ENCODE measurements at regions of chr1 and their contacts with region 1.

Region 1: GRCh38 chr1:211578640-211579433 is at the start of gene SLC30A1:
- DNase-seq: peak; percentile 98
- H3K4me3 ChIP-seq: peak within 1 kb of the TSS; percentile 74 to 99 (median 98)
- H3K27ac ChIP-seq: peak within 1 kb of the TSS; percentile 64
- H3K4me1 ChIP-seq: peaks cover 33% of the 10 kb centered on the region
- H3K27me3 ChIP-seq: no peaks in the 10 kb centered on the region
- CTCF ChIP-seq: no peak
- POLR2A ChIP-seq: peak; percentile 94
- total RNA-seq, gene SLC30A1: 21.5 and 22.1 TPM in 2 replicates

Region 2: DNA sequence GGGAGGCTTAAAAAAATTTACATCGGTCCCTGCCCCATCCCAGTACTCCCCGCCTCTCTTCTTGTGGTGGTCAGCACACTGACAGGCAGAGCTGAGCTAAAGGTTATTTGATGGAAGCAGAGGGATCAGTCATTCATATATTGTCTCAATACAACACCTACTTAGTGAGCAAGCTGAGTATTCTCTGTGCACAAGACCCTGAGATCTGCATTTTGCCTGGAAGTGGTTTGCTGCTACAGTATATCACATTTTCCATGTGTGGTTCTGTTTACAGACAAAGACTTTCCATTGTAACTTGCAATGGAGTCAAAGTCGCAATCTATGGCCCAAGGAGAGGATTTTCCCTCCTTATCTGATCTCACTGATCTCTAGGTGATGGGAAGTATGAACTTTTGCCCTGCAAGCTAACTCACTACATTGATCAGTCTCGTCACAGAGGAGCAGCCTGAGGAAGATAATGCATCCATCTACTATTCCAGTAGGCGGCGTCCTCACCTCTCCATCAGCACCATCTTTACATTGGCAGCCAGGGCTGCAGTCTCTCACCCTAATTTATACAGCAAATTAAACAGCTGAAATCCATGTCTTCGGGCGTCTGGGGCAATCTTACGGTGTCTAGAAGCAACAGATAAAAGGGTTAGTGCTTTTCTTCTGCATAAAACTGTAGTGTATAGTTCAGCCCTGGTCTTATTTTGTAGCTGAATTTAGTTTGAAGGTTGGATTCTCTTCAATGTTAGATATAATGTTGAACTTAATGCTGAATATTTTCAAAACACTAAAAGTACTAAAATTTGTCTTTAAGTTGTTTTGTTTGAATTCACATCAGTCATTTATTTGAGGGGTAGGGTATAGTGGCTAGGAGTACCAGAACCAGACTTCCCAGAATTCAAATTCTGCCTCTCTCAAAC is 255.4 kb before region 1 on chr1:
- CTCF ChIA-PET with region 1: interaction called, 4 read pairs
- POLR2A ChIA-PET with region 1: no interaction called
- dilution Hi-C with region 1: no loop called
- intact Hi-C with region 1: loop called (anchors 1 kb)
- DNase-seq: peak; percentile 68
- H3K4me3 ChIP-seq: no peak overlapping the region
- H3K27ac ChIP-seq: no peak overlapping the region
- H3K4me1 ChIP-seq: peaks cover 3% of the 10 kb centered on the region
- H3K27me3 ChIP-seq: no peaks in the 10 kb centered on the region
- CTCF ChIP-seq: peak; percentile 79 to 80
- POLR2A ChIP-seq: no peak

Region 3: GRCh38 chr1:211476200-211476849 is 102.5 kb before region 1 on chr1:
- CTCF ChIA-PET with region 1: interaction called, 3 read pairs
- POLR2A ChIA-PET with region 1: no interaction called
- dilution Hi-C with region 1: no loop called
- intact Hi-C with region 1: loop called (anchors 2 kb)
- DNase-seq: peak; percentile 69
- H3K4me3 ChIP-seq: no peak overlapping the region
- H3K27ac ChIP-seq: no peak overlapping the region
- H3K4me1 ChIP-seq: no peaks in the 10 kb centered on the region
- H3K27me3 ChIP-seq: peaks cover 19 to 38% of the 10 kb centered on the region in 2 experiments
- CTCF ChIP-seq: peak; percentile 87 to 88
- POLR2A ChIP-seq: no peak

Region 4: DNA sequence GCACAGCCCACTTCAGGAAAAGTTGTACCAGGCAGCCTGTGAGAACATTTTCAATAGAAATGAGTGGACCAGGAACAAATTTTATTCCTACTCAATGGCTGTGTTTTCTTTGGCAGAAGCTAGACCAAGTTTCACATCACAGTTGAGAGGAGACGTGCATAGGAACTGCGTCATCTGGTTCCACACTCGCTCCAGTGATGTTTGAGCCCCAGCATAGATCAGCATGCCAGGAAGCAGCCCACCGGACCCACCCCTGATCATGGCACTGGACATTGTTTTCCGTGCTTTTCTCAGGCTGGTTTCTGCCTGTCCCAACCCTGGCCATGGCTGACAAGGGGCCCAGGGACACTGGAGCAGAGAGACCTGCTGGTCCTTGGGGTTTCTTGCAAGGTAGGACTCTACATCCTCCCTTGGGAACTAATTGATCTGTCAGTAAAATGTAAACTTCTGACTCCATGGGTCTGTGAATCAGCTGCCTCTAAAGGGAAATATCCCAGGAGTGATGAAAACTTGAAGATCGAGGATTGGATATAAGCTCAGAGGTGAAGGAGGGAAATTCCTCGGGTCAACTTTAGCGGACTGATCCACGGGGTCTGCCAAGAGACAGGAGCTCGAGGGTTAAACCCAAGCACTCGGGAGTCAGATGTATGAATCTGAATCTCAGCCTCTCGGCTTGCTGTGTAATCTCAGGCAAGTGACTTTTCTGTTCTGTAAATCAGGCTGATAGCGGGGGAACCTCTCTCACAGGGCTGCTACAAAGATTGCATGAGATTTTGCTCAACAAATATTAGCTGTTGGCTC is 60.9 kb after region 1 on chr1:
- CTCF ChIA-PET with region 1: interaction called, 16 read pairs
- POLR2A ChIA-PET with region 1: interaction called, 3 read pairs
- dilution Hi-C with region 1: no loop called
- intact Hi-C with region 1: loop called (anchors 1 kb)
- DNase-seq: peak; percentile 96
- H3K4me3 ChIP-seq: peak overlapping the region in 2 of 3 experiments; percentile 31 to 37
- H3K27ac ChIP-seq: peak overlapping the region; percentile 95
- H3K4me1 ChIP-seq: peaks cover 27% of the 10 kb centered on the region
- H3K27me3 ChIP-seq: no peaks in the 10 kb centered on the region
- CTCF ChIP-seq: no peak
- POLR2A ChIP-seq: no peak

Region 5: GRCh38 chr1:211830330-211831142 is 251.7 kb after region 1 on chr1 and contains the start of gene LPGAT1:
- CTCF ChIA-PET with region 1: no interaction called
- POLR2A ChIA-PET with region 1: no interaction called
- dilution Hi-C with region 1: no loop called
- intact Hi-C with region 1: loop called (anchors 5 kb)
- DNase-seq: peak; percentile 58
- H3K4me3 ChIP-seq: peak within 1 kb of the TSS; percentile 74 to 92 (median 82)
- H3K27ac ChIP-seq: peak within 1 kb of the TSS; percentile 55
- H3K4me1 ChIP-seq: peaks cover 7% of the 10 kb centered on the region
- H3K27me3 ChIP-seq: no peaks in the 10 kb centered on the region
- CTCF ChIP-seq: peak; percentile 53 to 63
- POLR2A ChIP-seq: peak; percentile 36
- total RNA-seq, gene LPGAT1: 46.0 and 49.5 TPM in 2 replicates